Psoas muscle (tissue), 8 donors: ENCODE measurements at regions of chr12 and their contacts with region 1.

Region 1: GRCh38 chr12:30813525-30814294 is 59.0 kb upstream of the CAPRIN2 start:
- DNase-seq: no peak
- ATAC-seq: no peak
- H3K4me3 ChIP-seq: no peak overlapping the region
- H3K27ac ChIP-seq: no peak overlapping the region
- H3K4me1 ChIP-seq: no peaks in the 10 kb centered on the region
- H3K27me3 ChIP-seq: no peaks in the 10 kb centered on the region
- CTCF ChIP-seq: no peak

Region 2: GRCh38 chr12:30030693-30031374 is 782.9 kb before region 1 on chr12:
- intact Hi-C with region 1: loop called in 1 of 2 experiments (anchors 10 kb)
- DNase-seq: no peak
- ATAC-seq: no peak
- H3K4me3 ChIP-seq: no peak overlapping the region
- H3K27ac ChIP-seq: no peak overlapping the region
- H3K4me1 ChIP-seq: no peaks in the 10 kb centered on the region
- H3K27me3 ChIP-seq: no peaks in the 10 kb centered on the region
- CTCF ChIP-seq: no peak

Region 3: DNA sequence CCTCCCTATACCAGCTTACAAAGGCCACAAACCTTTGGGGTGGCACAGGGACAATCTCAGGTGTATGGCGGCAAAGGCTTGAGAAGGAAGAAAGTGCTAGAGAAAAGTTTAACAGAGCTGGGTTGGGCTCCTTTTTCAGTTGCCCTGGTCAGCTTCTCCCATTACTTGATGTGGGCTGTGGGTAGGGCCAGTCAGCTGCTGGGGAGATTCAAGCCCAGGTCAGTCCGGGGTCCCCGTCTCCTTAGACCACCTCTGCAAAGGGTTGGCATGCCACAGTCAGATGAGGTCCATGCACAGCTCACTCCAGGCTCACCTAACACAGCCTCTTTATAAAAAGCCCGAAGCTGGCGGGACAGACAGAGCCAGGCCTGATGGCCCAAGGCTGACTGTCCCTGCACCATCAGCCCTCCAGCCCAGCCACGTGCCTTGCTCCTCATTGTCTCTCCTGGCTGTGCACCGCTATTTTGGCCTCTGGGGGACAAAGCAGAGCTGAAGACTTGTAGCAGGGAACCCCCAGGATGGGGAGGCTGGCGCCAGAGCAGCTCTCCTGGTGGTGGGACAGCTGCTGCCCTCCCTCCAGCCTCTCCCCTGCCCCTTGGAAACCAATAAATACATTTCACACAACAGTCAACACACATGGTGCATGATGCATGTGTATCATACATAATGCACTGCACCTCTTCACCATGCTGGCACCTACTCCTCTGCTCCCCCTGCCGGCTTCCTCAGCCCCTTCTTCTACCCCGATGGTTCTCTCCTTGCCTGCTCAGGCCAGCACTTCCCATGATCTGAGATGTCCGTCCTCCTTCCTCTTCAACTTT is 198.2 kb after region 1 on chr12:
- intact Hi-C with region 1: no loop called
- DNase-seq: no peak
- ATAC-seq: no peak
- H3K4me3 ChIP-seq: no peak overlapping the region
- H3K27ac ChIP-seq: no peak overlapping the region
- H3K4me1 ChIP-seq: no peaks in the 10 kb centered on the region
- H3K27me3 ChIP-seq: peaks cover 0 to 3% (median 0%) of the 10 kb centered on the region in 3 donors
- CTCF ChIP-seq: no peak